CD14-positive monocyte (primary cell): ENCODE measurements at regions of chr19 and their contacts with region 1.

Region 1: DNA sequence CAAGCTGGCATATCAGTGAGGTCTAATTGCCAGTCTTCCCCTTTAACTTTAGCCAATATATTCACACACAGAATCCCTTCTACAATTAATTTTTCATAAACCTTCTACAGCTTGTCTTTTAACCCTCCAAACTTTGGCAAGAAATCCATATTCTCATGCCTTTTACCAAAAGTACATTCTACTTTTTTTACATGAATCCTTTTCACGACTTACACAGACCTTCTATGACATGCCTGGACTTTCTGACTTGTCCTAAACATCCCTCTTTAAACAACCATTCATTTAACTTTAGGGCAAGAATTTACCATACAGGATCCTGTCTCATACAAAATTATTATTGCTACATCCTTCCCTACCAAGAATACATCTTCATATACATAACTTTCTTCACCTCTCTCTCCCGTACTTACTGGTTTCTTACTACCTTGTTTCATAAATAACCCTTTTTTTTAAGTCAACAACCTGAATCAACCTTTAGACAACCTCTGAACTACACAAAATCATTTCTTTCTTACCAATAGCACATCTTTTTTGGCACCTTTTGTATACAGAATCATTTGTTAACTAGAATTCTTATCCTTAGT is 23.5 kb downstream of the ZNF544 start:
- DNase-seq: no peak
- H3K4me3 ChIP-seq: peak overlapping the region in 1 of 3 experiments; percentile 21
- H3K4me3 Mint-ChIP-seq: no peak overlapping the region
- H3K27ac ChIP-seq: no peak overlapping the region
- H3K27ac Mint-ChIP-seq: no peak overlapping the region
- H3K4me1 ChIP-seq: no peaks in the 10 kb centered on the region
- H3K4me1 Mint-ChIP-seq: no peaks in the 10 kb centered on the region
- H3K27me3 ChIP-seq: no peaks in the 10 kb centered on the region
- H3K27me3 Mint-ChIP-seq: peaks cover 0 to 1% (median 0%) of the 10 kb centered on the region in 3 donors
- CTCF ChIP-seq: no peak

Region 2: DNA sequence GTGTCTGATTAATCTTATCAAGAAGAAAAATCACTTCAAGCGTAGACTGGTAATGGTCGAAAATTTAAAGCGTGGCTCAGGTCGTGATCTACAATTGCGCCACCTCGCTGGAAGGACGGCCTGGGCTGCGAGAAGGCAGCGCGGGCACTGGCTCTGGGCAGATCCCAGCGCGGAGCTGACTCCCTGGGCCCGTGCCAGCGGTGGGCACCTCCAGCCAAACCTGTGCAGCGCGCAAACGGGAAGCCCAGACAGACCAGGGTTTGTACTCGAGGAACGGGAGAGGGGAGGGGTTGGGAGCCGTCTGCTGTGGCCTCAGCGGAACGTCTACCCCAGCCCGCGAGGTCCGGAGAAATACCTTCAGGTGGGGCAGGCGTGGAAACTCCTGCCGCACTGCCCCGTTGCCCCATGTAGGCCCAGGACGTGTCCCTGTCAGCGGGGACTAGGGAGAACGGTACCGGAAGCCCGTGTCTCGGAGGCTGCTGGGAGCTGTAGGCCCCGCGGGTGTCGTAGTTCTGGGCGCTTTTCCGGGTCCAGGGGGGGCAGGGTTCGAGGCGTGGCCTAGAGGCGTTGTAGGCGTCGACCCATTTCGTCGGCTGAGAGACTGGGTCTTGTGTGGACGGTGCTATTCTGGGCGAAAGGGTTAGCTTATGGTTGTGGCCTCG is 48.2 kb before region 1 on chr19:
- intact Hi-C with region 1: loop called in 1 of 2 experiments (anchors 10 kb)
- DNase-seq: no peak
- H3K4me3 ChIP-seq: peak overlapping the region in 1 of 3 experiments; percentile 47
- H3K4me3 Mint-ChIP-seq: no peak overlapping the region
- H3K27ac ChIP-seq: no peak overlapping the region
- H3K27ac Mint-ChIP-seq: no peak overlapping the region
- H3K4me1 ChIP-seq: no peaks in the 10 kb centered on the region
- H3K4me1 Mint-ChIP-seq: no peaks in the 10 kb centered on the region
- H3K27me3 ChIP-seq: no peaks in the 10 kb centered on the region
- H3K27me3 Mint-ChIP-seq: peaks cover 0 to 2% (median 0%) of the 10 kb centered on the region in 3 donors
- CTCF ChIP-seq: no peak

Region 3: GRCh38 chr19:58218899-58219298 is 33.3 kb before region 1 on chr19:
- intact Hi-C with region 1: loop called in 1 of 2 experiments (anchors 2 kb)
- DNase-seq: no peak
- H3K4me3 ChIP-seq: no peak overlapping the region
- H3K4me3 Mint-ChIP-seq: no peak overlapping the region
- H3K27ac ChIP-seq: no peak overlapping the region
- H3K27ac Mint-ChIP-seq: no peak overlapping the region
- H3K4me1 ChIP-seq: no peaks in the 10 kb centered on the region
- H3K4me1 Mint-ChIP-seq: no peaks in the 10 kb centered on the region
- H3K27me3 ChIP-seq: no peaks in the 10 kb centered on the region
- H3K27me3 Mint-ChIP-seq: peaks cover 0 to 2% (median under 1%) of the 10 kb centered on the region in 3 donors
- CTCF ChIP-seq: peak; percentile 30

Region 4: DNA sequence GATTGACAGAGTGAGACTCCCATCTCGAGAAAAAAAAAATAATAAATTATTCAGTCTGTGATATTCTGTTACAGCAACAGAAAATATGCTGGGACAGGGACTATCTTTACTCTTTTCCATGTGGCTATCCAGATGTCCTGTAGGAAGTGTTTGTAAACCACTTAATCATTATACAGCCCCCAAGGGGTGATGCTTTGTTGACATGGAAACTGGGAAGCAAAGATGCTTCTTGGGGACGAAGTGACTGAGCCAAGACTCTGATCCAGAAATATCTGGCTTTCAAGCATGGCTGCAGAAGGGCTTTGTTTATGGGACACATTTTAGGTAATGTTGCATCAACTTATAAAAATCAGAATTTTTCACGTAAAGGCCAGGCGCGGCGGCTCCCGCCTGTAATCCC is 32.0 kb after region 1 on chr19:
- intact Hi-C with region 1: no loop called
- DNase-seq: no peak
- H3K4me3 ChIP-seq: no peak overlapping the region
- H3K4me3 Mint-ChIP-seq: no peak overlapping the region
- H3K27ac ChIP-seq: no peak overlapping the region
- H3K27ac Mint-ChIP-seq: no peak overlapping the region
- H3K4me1 ChIP-seq: peaks cover 8 to 11% of the 10 kb centered on the region in 2 donors
- H3K4me1 Mint-ChIP-seq: peaks cover 13% of the 10 kb centered on the region
- H3K27me3 ChIP-seq: no peaks in the 10 kb centered on the region
- H3K27me3 Mint-ChIP-seq: peaks cover 0 to 2% (median 0%) of the 10 kb centered on the region in 3 donors
- CTCF ChIP-seq: no peak